Activated B cell treated with CpG ODN at 0.5 μM for 24 hours (primary cell): ENCODE measurements at regions of chr3 and their contacts with region 1.

Region 1: GRCh38 chr3:184017672-184018423 is at the start of gene ABCC5:
- DNase-seq: peak; percentile 70
- ATAC-seq: peak; percentile 96
- H3K4me3 Mint-ChIP-seq: peak within 1 kb of the TSS; percentile 100
- H3K27ac Mint-ChIP-seq: peak within 1 kb of the TSS; percentile 84
- H3K4me1 Mint-ChIP-seq: peaks cover 13% of the 10 kb centered on the region
- H3K27me3 Mint-ChIP-seq: peaks cover 12% of the 10 kb centered on the region
- CTCF ChIP-seq: peak; percentile 7
- total RNA-seq, gene ABCC5: 10.6 and 11.1 TPM in 2 replicates

Region 2: DNA sequence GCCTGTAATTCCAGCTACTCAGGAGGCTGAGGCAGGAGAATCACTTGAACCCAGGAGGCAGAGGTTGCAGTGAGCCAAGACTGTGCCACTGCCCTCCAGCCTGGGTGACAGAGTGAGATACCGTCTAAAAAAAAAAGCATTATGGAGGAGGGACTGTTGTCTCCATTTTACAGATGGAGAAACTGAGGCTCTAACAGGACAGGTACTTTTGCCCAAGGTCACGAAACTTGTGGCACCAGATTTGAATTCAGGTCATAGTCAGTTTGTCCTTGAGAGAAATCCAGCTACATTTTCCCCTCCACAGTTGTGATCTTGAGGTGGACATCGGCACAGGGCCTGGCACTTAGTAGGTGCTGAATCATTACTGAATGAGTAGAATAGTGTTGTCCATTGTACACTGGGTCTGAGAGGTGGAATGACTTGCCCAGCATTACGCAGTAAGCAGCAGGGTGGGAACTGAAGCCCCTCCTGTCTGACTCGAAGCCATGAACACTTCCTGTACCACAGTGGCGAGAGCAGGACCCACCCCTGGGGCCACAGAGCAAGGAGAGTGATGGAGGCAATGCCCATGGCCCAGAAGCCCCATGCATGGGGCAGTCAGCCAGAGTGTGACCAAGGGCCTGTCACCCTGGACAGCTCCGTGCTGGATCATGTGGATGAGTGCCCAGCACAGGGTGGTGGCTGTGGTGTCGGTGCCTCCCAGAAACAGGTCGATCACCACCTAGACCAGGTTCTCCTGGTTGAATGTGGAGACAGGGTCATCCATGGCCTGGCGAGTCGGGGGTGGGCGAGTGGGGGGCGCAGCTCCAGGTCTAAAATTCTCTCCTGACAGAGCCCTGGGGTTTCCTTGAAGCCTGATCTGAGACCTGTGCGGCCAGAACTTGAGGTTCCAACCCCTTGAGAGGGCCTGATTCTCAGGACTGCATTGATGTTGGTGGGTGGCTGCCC is 112.7 kb before region 1 on chr3:
- CTCF ChIA-PET with region 1: interaction called, 9 read pairs
- POLR2A ChIA-PET with region 1: no interaction called
- intact Hi-C with region 1: loop called (anchors 1 kb)
- DNase-seq: no peak
- ATAC-seq: no peak
- H3K4me3 Mint-ChIP-seq: no peak overlapping the region
- H3K27ac Mint-ChIP-seq: no peak overlapping the region
- H3K4me1 Mint-ChIP-seq: no peaks in the 10 kb centered on the region
- H3K27me3 Mint-ChIP-seq: peaks cover 10% of the 10 kb centered on the region
- CTCF ChIP-seq: no peak

Region 3: GRCh38 chr3:184005941-184006507 is 11.8 kb before region 1 on chr3:
- CTCF ChIA-PET with region 1: interaction called, 7 read pairs
- POLR2A ChIA-PET with region 1: interaction called, 5 read pairs
- intact Hi-C with region 1: loop called (anchors 1 kb)
- DNase-seq: peak; percentile 25
- ATAC-seq: peak; percentile 87
- H3K4me3 Mint-ChIP-seq: peak overlapping the region; percentile 36
- H3K27ac Mint-ChIP-seq: peak overlapping the region; percentile 67
- H3K4me1 Mint-ChIP-seq: peaks cover 33% of the 10 kb centered on the region
- H3K27me3 Mint-ChIP-seq: no peaks in the 10 kb centered on the region
- CTCF ChIP-seq: no peak

Region 4: GRCh38 chr3:184154885-184155643 is 137.2 kb after region 1 on chr3 and contains the start of gene DVL3:
- CTCF ChIA-PET with region 1: no interaction called
- POLR2A ChIA-PET with region 1: no interaction called
- intact Hi-C with region 1: loop called (anchors 1 kb)
- DNase-seq: peak; percentile 70
- ATAC-seq: peak; percentile 80
- H3K4me3 Mint-ChIP-seq: peak within 1 kb of the TSS; percentile 91
- H3K27ac Mint-ChIP-seq: peak within 1 kb of the TSS; percentile 77
- H3K4me1 Mint-ChIP-seq: peaks cover 25% of the 10 kb centered on the region
- H3K27me3 Mint-ChIP-seq: no peaks in the 10 kb centered on the region
- CTCF ChIP-seq: no peak
- total RNA-seq, gene DVL3: 52.1 and 54.2 TPM in 2 replicates